ENCODE measurements at regions of chr4 and their contacts with region 1.

Region 1: GRCh38 chr4:74376888-74377483 is 12.0 kb downstream of the EREG start:
- DNase-seq: peak in 2 of 3 donors; percentile 44 to 61
- H3K4me3 ChIP-seq: no peak overlapping the region
- H3K4me3 Mint-ChIP-seq: no peak overlapping the region
- H3K27ac ChIP-seq: no peak overlapping the region
- H3K27ac Mint-ChIP-seq: no peak overlapping the region
- H3K4me1 ChIP-seq: peaks cover 12 to 14% of the 10 kb centered on the region in 2 donors
- H3K4me1 Mint-ChIP-seq: peaks cover 17% of the 10 kb centered on the region
- H3K27me3 ChIP-seq: no peaks in the 10 kb centered on the region
- H3K27me3 Mint-ChIP-seq: no peaks in the 10 kb centered on the region
- CTCF ChIP-seq: peak; percentile 74

Region 2: DNA sequence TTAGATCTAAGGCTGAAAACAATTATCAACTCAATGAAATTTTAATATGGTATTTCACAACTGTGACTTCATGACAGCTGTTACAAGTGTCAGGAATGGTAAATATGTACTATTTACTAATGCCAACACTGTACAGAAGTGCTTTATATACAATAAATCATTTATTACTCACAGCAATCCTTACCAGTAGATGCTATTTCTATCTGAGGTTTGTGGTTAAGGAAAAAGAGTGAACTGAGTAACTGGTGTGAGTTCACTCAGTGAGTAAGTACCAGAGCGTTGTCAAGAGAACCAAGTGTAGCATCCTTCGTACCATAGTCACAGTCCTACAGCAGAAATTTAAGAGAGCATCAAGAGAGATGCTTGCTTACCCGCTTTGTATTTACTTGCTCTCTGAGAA is 195.8 kb before region 1 on chr4:
- intact Hi-C with region 1: no loop called
- DNase-seq: no peak
- H3K4me3 ChIP-seq: no peak overlapping the region
- H3K4me3 Mint-ChIP-seq: no peak overlapping the region
- H3K27ac ChIP-seq: no peak overlapping the region
- H3K27ac Mint-ChIP-seq: no peak overlapping the region
- H3K4me1 ChIP-seq: no peaks in the 10 kb centered on the region
- H3K4me1 Mint-ChIP-seq: no peaks in the 10 kb centered on the region
- H3K27me3 ChIP-seq: no peaks in the 10 kb centered on the region
- H3K27me3 Mint-ChIP-seq: no peaks in the 10 kb centered on the region
- CTCF ChIP-seq: no peak

Region 3: GRCh38 chr4:74671080-74671698 is 294.2 kb after region 1 on chr4:
- intact Hi-C with region 1: loop called in 1 of 2 experiments (anchors 5 kb)
- DNase-seq: peak; percentile 36 to 61 (median 61)
- H3K4me3 ChIP-seq: no peak overlapping the region
- H3K4me3 Mint-ChIP-seq: no peak overlapping the region
- H3K27ac ChIP-seq: no peak overlapping the region
- H3K27ac Mint-ChIP-seq: no peak overlapping the region
- H3K4me1 ChIP-seq: no peaks in the 10 kb centered on the region
- H3K4me1 Mint-ChIP-seq: peaks cover 4% of the 10 kb centered on the region
- H3K27me3 ChIP-seq: no peaks in the 10 kb centered on the region
- H3K27me3 Mint-ChIP-seq: peaks cover 0 to 6% (median 1%) of the 10 kb centered on the region in 3 donors
- CTCF ChIP-seq: peak; percentile 85